Activated CD8-positive, alpha-beta T cell treated with anti-CD3 and anti-CD28 coated beads for 36 hours (primary cell): ENCODE measurements at regions of chr1 and their contacts with region 1.

Region 1: DNA sequence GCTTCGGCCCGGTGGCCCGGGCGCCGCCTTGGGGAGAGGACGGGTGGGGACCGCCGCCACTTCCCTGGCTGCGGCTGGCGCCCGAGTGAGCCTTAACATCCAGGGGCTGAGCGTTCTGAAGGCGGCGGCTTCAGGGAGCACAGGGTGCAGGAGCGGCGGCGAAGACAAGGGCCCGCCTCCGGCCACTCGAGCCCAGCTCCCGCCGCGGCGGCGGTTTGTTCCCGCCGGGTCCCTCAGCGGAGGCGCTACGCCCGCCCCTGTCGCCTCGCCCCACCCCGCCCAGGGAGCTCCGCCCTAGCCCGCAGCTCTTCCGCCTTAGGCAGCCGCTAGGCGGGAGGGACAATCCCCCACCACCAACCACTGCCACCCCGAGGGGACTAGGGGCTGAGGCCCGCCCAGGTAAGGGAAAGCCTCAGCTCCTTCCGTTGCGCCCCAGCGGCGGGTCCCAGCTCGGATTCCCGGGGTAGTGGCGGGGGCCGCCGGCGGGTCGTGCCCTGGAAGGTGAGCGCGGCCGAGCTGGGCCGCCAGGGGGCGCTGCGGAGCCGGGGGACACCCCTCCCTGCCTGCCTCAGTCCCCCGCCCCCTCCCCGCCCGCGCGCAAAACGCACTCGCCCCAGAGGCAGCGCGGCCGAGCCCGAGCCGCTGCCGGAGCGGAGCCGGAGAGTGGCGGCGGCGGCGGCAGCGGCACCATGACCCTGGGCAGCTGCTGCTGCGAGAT is at the start of gene FOXD2:
- DNase-seq: peak; percentile 94
- ATAC-seq: peak; percentile 93
- H3K4me3 Mint-ChIP-seq: peak within 1 kb of the TSS; percentile 89
- H3K27ac Mint-ChIP-seq: peak within 1 kb of the TSS; percentile 76
- H3K4me1 Mint-ChIP-seq: peaks cover 27% of the 10 kb centered on the region
- H3K27me3 Mint-ChIP-seq: peaks cover 32% of the 10 kb centered on the region
- CTCF ChIP-seq: peak; percentile 98
- total RNA-seq, gene FOXD2: 0.11 to 0.18 TPM

Region 2: DNA sequence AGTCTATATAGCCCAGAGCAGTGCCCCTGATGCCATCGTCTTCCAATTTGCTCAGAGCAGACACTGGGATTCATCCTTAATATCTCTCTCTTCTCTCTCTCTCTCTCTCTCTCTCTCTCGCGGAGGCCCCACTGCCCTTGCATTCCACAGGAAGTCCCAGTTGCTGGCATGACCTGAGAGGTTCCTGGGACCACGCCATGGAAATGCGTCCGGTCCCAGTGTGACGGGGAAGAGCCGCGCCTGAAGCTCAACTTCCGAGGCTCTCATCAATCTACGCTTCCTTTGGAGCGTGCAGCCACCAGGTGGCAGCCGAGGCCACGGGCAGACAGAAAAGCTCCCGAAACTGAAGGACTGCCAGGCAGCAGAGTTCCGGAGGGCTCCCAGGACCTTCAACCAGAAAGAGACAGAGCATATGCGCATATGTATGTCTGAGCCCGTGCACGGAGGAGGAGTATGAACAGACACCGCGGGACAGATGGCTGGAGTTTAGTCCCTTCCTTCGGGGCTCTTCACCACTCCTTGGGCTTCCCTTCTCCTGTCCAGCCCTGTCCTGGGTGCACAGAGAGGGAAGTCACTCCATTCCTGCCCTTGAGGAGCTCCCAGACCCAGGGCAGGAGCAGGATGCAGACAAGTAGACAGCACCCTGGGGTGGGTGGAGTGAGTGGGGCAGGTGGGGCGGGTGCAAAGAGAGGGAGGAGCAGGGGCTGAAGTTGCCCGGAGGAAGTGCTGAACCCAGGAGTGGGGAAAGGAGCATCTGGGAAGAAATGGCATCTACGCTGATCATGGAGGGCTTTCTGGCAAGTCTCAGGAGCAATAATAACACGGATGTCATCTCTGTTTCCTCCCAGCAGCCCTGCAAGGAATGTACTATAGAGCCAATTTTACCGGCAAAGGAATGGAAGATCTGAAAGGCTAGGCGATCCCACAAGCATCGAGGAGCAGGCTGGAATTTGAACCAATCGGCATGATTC is 258.3 kb before region 1 on chr1:
- CTCF ChIA-PET with region 1: interaction called, 15 read pairs
- POLR2A ChIA-PET with region 1: no interaction called
- intact Hi-C with region 1: no loop called
- DNase-seq: peak; percentile 91
- ATAC-seq: peak; percentile 88
- H3K4me3 Mint-ChIP-seq: peak overlapping the region; percentile 61
- H3K27ac Mint-ChIP-seq: peak overlapping the region; percentile 68
- H3K4me1 Mint-ChIP-seq: peaks cover 8% of the 10 kb centered on the region
- H3K27me3 Mint-ChIP-seq: peaks cover 22% of the 10 kb centered on the region
- CTCF ChIP-seq: peak; percentile 82

Region 3: GRCh38 chr1:47417170-47418044 is 20.2 kb before region 1 on chr1:
- CTCF ChIA-PET with region 1: interaction called, 21 read pairs
- POLR2A ChIA-PET with region 1: interaction called, 5 read pairs
- intact Hi-C with region 1: no loop called
- DNase-seq: no peak
- ATAC-seq: no peak
- H3K4me3 Mint-ChIP-seq: no peak overlapping the region
- H3K27ac Mint-ChIP-seq: no peak overlapping the region
- H3K4me1 Mint-ChIP-seq: peaks cover 6% of the 10 kb centered on the region
- H3K27me3 Mint-ChIP-seq: peaks cover 32% of the 10 kb centered on the region
- CTCF ChIP-seq: no peak

Region 4: DNA sequence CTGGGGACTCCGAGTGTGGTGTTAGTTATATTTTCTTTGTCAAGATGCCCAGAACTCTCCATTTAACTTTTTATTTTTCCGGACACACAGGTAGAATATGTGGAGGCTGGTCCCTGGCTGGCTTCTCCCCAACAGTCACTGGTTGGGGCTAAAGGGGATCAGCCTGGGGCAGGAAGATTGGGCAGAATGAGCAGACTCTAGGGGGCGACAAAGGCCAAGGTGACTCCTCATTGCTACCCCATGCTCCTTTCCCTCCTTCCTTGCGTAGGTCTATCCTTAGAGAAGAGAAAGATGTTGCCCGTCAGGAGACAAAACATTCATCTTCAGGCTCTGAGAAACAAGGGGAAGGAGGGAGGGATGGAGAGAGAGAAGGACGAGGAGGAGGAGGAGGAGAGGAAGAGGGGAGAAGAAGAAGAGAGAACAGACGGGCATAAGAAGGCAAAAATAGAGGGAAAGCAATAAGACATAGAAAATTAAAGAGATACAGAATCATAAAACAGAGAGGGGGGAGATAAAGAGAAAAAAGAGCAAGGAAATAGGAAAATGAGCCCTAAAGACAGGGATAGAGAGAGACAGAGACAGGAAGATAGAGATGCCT is 90.2 kb after region 1 on chr1:
- CTCF ChIA-PET with region 1: interaction called, 17 read pairs
- POLR2A ChIA-PET with region 1: no interaction called
- intact Hi-C with region 1: no loop called
- DNase-seq: peak; percentile 31
- ATAC-seq: no peak
- H3K4me3 Mint-ChIP-seq: no peak overlapping the region
- H3K27ac Mint-ChIP-seq: no peak overlapping the region
- H3K4me1 Mint-ChIP-seq: no peaks in the 10 kb centered on the region
- H3K27me3 Mint-ChIP-seq: peaks cover 46% of the 10 kb centered on the region
- CTCF ChIP-seq: no peak

Region 5: DNA sequence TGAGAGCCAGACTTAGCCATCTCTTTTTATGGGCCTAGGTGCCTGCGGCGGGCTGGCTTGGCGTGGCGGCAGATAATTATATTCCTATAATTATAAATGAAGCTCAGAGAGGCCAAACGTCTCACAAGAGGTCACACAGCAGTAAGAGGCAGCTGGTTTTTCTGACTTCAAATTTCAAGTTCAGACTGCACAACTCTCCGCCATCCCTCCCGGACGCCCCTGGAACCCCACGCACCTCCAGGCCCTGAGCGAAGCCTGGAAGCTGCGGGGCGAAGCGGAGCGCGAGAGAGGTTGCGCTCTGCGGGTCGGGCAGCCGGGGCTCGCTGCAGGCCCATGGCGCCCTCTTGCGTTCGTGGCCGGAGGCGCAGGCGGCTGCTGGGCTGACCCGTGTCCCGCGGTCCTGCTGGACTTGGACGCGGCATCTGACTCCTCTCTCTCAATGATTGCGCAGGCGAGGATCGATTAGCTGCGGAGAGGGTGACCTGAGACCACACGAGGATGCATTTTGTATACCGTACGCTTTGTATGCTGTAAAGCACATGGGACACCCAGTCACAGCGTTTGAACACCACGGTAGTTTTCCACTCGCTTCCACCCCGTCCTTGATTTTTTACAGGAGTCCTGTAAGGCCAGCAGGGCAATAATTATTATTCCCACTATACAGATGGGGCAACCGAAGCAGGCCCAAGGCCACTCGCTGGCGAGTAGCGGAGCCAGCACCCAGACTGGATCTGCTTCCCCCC is 272.9 kb after region 1 on chr1:
- CTCF ChIA-PET with region 1: interaction called, 125 read pairs
- POLR2A ChIA-PET with region 1: interaction called, 3 read pairs
- intact Hi-C with region 1: loop called (anchors 2 kb)
- DNase-seq: peak; percentile 75
- ATAC-seq: peak; percentile 86
- H3K4me3 Mint-ChIP-seq: no peak overlapping the region
- H3K27ac Mint-ChIP-seq: no peak overlapping the region
- H3K4me1 Mint-ChIP-seq: peaks cover 10% of the 10 kb centered on the region
- H3K27me3 Mint-ChIP-seq: peaks cover 60% of the 10 kb centered on the region
- CTCF ChIP-seq: peak; percentile 99